ENCODE measurements at regions of chr11 and their contacts with region 1.

Region 1: GRCh38 chr11:58579192-58580129 is 598 bp downstream of the ZFP91 start:
- DNase-seq: peak; percentile 94 to 96 (median 95)
- ATAC-seq: peak; percentile 43 to 78 (median 69)
- H3K4me3 ChIP-seq: peak overlapping the region; percentile 78 to 100 (median 90)
- H3K27ac ChIP-seq: peak overlapping the region; percentile 98 to 100 (median 99)
- H3K4me1 ChIP-seq: peaks cover 5 to 76% (median 53%) of the 10 kb centered on the region in 12 donors
- H3K27me3 ChIP-seq: no peaks in the 10 kb centered on the region
- CTCF ChIP-seq: peak; percentile 62 to 94 (median 80)
- POLR2A ChIP-seq: peak in 1 of 2 donors; percentile 47

Region 2: DNA sequence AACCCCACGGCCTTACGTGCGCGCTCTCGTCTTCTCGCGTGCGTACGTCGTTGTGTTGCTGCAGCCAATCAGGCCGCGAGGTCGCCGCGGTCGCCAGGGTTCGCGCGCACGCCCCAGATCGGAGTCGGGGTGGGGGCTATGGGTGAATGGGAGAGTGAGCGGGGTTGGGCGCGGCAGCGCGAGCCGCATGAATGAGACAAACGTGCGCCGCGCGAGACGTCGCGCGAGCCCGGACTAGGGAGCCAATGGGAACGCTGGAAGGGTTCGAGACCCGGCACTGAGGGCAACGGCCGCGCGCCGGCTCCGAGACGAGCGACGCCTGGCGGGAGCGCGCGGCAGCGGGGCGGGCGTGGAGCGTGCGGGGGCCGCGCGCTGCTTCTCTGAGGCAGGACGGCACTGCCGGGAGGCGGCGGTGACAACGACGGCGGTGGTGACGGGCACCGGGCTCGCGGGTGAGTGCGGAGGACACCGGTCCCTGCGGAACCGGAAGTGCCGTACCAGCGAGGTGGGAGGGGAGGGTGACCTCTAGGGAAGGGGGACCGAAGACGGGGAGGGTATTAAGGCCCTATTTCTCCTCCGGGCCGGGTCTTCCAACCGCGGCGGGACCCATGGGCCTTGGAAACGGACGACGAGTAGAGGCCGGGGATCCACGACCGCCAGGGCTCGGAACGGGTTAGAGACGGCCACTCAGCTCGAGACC is 911.6 kb before region 1 on chr11 and contains the start of gene ZDHHC5:
- intact Hi-C with region 1: loop called in 2 of 10 experiments (anchors 2 to 5 kb)
- DNase-seq: peak; percentile 99 to 100 (median 100)
- ATAC-seq: peak; percentile 94 to 97 (median 96)
- H3K4me3 ChIP-seq: peak within 1 kb of the TSS; percentile 76 to 99 (median 88)
- H3K27ac ChIP-seq: peak within 1 kb of the TSS; percentile 96 to 100 (median 98)
- H3K4me1 ChIP-seq: peaks cover 7 to 42% (median 20%) of the 10 kb centered on the region in 12 donors
- H3K27me3 ChIP-seq: no peaks in the 10 kb centered on the region
- CTCF ChIP-seq: peak; percentile 27 to 80 (median 56)
- POLR2A ChIP-seq: peak; percentile 3 to 84
- total RNA-seq, gene ZDHHC5: 32.5 to 63.6 (median 45.7) TPM

Region 3: DNA sequence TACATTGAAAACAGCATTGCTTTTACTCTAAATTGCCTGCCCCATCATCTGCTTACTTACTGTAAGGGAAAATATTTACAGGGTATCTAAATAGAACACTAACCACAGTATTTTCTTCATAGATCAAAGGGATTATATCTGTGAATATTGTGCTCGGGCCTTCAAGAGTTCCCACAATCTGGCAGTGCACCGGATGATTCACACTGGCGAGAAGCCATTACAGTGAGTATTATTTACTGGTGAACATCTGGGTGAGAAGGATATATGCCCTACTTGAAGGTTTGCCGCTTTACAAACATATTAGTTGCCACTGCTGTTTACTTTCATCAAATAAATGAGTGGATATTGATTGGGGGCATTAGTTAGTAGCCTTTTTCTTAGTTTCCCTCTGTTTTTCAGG is 37.1 kb after region 1 on chr11:
- intact Hi-C with region 1: loop called in 8 of 10 experiments (anchors 5 kb)
- DNase-seq: peak in 3 of 5 donors; percentile 21 to 53 (median 50)
- ATAC-seq: peak; percentile 62 to 84 (median 70)
- H3K4me3 ChIP-seq: no peak overlapping the region
- H3K27ac ChIP-seq: peak overlapping the region in 1 of 12 donors; percentile 37
- H3K4me1 ChIP-seq: peaks cover 0 to 34% (median 15%) of the 10 kb centered on the region in 12 donors
- H3K27me3 ChIP-seq: no peaks in the 10 kb centered on the region
- CTCF ChIP-seq: no peak
- POLR2A ChIP-seq: no peak

Region 4: GRCh38 chr11:58629857-58630256 is 50.4 kb after region 1 on chr11:
- intact Hi-C with region 1: loop called in 2 of 10 experiments (anchors 5 kb)
- DNase-seq: no peak
- ATAC-seq: peak; percentile 25 to 40 (median 32)
- H3K4me3 ChIP-seq: no peak overlapping the region
- H3K27ac ChIP-seq: no peak overlapping the region
- H3K4me1 ChIP-seq: peaks cover 0 to 23% (median 13%) of the 10 kb centered on the region in 12 donors
- H3K27me3 ChIP-seq: no peaks in the 10 kb centered on the region
- CTCF ChIP-seq: peak in 9 of 12 donors; percentile 36 to 66 (median 53)
- POLR2A ChIP-seq: no peak

Region 5: GRCh38 chr11:58788355-58789023 is 209.0 kb after region 1 on chr11:
- intact Hi-C with region 1: loop called in 4 of 10 experiments (anchors 10 kb)
- DNase-seq: peak in 2 of 5 donors; percentile 21 to 29
- ATAC-seq: peak in 3 of 4 donors; percentile 58 to 79 (median 74)
- H3K4me3 ChIP-seq: no peak overlapping the region
- H3K27ac ChIP-seq: no peak overlapping the region
- H3K4me1 ChIP-seq: no peaks in the 10 kb centered on the region
- H3K27me3 ChIP-seq: peaks cover 0 to 10% (median 0%) of the 10 kb centered on the region in 9 donors
- CTCF ChIP-seq: peak; percentile 24 to 71 (median 58)
- POLR2A ChIP-seq: no peak

Region 6: GRCh38 chr11:59142530-59143507 is 563.4 kb after region 1 on chr11 and contains the start of gene FAM111A:
- intact Hi-C with region 1: loop called in 1 of 10 experiments (anchors 5 kb)
- DNase-seq: peak; percentile 88 to 92 (median 90)
- ATAC-seq: peak; percentile 91 to 97 (median 96)
- H3K4me3 ChIP-seq: peak within 1 kb of the TSS; percentile 45 to 90 (median 76)
- H3K27ac ChIP-seq: peak within 1 kb of the TSS; percentile 54 to 97 (median 88)
- H3K4me1 ChIP-seq: peaks cover 0 to 54% (median 19%) of the 10 kb centered on the region in 12 donors
- H3K27me3 ChIP-seq: no peaks in the 10 kb centered on the region
- CTCF ChIP-seq: peak in 9 of 12 donors; percentile 5 to 48 (median 26)
- POLR2A ChIP-seq: peak in 1 of 2 donors; percentile 45
- total RNA-seq, gene FAM111A: 4.1 to 38.3 (median 9.1) TPM